Prostate gland (tissue), 2 donors: ENCODE measurements at regions of chr10 and their contacts with region 1.

Region 1: GRCh38 chr10:110210674-110211464 is 3.5 kb downstream of the MXI1 start:
- DNase-seq: peak; percentile 97
- H3K4me3 ChIP-seq: peak overlapping the region; percentile 69 to 70
- H3K27ac ChIP-seq: peak overlapping the region; percentile 81 to 91
- H3K4me1 ChIP-seq: peaks cover 3% of the 10 kb centered on the region
- H3K27me3 ChIP-seq: no peaks in the 10 kb centered on the region
- CTCF ChIP-seq: no peak
- POLR2A ChIP-seq: peak; percentile 67

Region 2: DNA sequence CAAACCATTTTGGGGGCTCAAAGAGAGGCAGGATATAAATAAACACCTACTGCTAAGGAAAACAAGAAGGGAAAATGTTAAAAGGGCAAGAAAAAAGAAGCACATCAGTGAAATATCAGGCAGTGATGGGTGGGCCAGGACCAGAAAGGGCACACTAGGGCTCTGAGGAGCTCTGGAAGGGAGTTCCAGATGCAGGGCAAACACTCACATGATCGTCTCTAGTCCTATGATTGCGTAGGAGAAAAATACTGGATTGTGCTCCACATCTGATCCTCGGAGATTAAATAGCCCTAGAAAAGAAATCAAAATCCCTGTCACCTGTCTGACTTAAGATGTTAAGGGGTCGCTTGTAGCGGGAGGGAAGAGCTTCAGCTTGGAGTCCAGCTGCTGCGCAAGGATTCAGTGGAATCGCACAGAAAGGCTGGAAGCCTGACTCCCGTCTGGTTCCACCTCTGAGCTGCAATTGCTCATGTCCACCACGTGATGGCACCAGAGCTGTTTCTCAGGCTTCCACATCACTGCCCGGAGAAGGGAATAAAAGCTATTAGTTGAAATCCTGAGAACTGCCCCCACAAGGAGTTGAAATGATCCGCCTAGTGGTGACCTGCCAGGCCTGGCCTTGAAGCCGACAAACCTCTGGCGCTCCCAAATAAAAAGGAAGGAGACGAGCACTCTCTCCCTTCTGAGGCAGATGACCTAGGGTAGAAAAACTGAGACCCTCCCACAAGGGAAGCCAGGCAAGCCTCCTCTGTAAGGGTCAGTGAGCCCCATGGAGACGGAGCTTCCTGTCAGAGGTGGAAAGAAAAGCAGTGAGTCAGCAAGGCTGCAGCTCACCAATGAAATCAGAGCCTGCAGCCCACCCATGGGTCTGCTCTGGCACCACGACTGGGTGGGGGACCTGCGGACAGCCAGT is 326.8 kb before region 1 on chr10:
- intact Hi-C with region 1: loop called (anchors 10 kb)
- DNase-seq: peak; percentile 41
- H3K4me3 ChIP-seq: no peak overlapping the region
- H3K27ac ChIP-seq: peak overlapping the region; percentile 14 to 42
- H3K4me1 ChIP-seq: no peaks in the 10 kb centered on the region
- H3K27me3 ChIP-seq: no peaks in the 10 kb centered on the region
- CTCF ChIP-seq: peak; percentile 84 to 93 (median 88)
- POLR2A ChIP-seq: no peak

Region 3: DNA sequence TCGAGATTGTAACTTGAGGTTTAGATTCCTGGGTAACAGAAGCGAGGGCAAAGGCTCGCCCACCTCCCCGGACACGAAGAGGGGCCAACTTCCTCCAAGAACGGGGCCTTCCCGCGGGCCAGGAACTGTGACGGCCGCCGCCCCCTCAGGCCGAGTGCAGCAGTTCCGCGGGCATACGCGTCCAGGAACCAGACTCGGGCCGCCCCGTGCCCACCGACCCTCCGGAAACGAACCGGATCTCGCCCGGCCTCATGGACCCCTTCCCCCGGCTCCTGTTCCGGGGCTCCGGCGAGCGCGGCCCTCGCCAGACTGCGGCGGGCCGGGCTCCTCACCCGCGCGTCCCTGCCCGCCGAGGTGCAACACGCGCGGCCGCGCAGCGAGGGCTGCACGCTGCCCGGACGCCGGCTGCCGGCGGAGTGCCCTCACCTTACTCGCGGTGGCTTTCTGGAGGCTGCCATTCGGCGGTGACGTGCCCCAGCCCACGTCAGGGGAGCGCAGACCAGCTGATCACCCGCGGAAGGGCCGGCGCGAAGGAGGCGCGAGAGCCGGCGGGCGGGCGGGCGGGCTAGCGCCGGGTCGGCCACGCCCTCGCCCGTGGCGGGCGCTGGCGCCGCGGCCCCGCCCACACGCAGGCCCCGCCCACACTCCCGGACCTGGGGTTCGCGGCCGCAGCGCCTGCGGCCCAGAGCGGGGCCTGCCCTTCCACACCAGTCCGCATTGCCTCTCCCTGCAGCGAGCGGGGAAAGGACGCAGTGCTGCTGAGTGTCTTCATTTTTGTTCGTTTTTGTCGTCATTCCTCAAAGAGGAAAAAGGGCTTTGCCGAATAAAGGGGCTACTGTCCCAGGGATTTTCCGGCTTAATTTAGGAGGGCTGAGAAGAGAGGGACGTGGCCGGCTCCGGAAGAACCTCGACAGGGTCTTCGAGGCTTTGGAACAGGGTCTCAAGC is 287.6 kb before region 1 on chr10 and contains the start of gene XPNPEP1:
- intact Hi-C with region 1: loop called (anchors 10 kb)
- DNase-seq: peak; percentile 86
- H3K4me3 ChIP-seq: peak within 1 kb of the TSS; percentile 92
- H3K27ac ChIP-seq: peak within 1 kb of the TSS; percentile 87 to 93
- H3K4me1 ChIP-seq: no peaks in the 10 kb centered on the region
- H3K27me3 ChIP-seq: no peaks in the 10 kb centered on the region
- CTCF ChIP-seq: no peak
- POLR2A ChIP-seq: peak; percentile 84
- total RNA-seq, gene XPNPEP1: 53.4 to 64.3 TPM

Region 4: DNA sequence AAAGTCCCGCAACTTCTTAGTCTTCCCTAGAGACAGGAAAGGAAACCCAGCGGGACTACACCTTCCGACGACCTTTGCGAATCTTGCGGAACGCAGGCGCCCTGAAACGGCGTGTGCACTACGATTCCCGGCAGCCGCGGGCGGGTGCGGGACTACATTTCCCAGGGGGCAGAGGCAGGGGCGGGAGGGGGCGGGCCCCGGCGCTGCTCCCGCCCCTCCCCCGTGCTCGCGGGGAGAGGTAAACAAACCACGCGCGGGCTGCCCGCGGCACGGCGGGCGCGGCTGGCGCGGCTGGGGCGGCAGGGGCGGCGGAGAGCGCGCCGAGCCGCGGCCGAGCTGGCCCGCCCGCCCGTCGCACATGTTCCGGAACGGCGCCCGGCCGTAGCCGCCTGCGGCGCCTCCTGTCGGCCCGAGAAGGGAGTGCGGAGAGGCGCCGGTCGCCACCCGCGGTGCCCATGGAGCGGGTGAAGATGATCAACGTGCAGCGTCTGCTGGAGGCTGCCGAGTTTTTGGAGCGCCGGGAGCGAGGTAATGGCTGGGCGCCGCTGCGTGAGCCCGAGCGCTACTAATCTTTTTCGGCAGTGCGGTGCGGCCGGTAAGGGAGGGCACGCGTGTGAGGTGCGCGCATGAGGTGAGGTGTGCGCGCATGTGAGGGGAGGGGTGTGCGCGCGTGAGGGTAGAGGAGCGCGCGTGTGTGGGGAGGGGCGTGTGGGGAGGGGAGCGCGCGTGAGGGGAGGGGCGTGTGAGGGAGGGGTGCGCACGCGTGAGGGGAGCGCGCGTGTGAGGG is 15.1 kb after region 1 on chr10:
- intact Hi-C with region 1: loop called (anchors 1 kb)
- DNase-seq: peak; percentile 90
- H3K4me3 ChIP-seq: peak overlapping the region; percentile 78 to 89
- H3K27ac ChIP-seq: peak overlapping the region; percentile 96
- H3K4me1 ChIP-seq: no peaks in the 10 kb centered on the region
- H3K27me3 ChIP-seq: no peaks in the 10 kb centered on the region
- CTCF ChIP-seq: peak; percentile 56 to 83 (median 75)
- POLR2A ChIP-seq: peak; percentile 36

Region 5: DNA sequence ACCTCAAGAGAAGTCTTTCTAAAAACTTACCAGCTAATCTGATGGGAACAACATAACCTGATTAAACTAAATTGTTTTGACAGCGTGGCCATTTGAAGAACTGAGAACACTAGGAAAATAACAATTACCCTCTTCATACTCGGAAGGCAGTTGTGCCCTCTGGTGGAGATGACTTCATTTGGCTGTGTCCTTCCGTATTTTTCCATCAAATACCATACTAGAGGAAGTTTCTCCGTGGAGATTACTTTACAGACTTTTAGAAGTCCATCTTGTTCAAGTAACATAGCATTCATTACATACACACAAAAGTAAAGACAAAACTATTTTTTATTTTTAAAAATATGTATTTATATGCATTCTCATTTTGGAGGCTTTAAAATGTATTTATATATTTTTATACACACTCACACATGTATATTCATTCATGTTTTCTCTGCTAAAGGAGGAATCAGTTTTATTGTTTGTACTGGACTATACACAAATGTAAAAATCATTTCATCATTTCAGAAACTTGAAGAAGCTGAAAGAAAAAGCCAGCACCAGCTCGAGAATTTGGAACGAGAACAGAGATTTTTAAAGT is 68.6 kb after region 1 on chr10:
- intact Hi-C with region 1: loop called (anchors 2 kb)
- DNase-seq: peak; percentile 62
- H3K4me3 ChIP-seq: no peak overlapping the region
- H3K27ac ChIP-seq: peak overlapping the region in 1 of 2 donors; percentile 36
- H3K4me1 ChIP-seq: no peaks in the 10 kb centered on the region
- H3K27me3 ChIP-seq: no peaks in the 10 kb centered on the region
- CTCF ChIP-seq: peak; percentile 52 to 87 (median 80)
- POLR2A ChIP-seq: no peak

Region 6: DNA sequence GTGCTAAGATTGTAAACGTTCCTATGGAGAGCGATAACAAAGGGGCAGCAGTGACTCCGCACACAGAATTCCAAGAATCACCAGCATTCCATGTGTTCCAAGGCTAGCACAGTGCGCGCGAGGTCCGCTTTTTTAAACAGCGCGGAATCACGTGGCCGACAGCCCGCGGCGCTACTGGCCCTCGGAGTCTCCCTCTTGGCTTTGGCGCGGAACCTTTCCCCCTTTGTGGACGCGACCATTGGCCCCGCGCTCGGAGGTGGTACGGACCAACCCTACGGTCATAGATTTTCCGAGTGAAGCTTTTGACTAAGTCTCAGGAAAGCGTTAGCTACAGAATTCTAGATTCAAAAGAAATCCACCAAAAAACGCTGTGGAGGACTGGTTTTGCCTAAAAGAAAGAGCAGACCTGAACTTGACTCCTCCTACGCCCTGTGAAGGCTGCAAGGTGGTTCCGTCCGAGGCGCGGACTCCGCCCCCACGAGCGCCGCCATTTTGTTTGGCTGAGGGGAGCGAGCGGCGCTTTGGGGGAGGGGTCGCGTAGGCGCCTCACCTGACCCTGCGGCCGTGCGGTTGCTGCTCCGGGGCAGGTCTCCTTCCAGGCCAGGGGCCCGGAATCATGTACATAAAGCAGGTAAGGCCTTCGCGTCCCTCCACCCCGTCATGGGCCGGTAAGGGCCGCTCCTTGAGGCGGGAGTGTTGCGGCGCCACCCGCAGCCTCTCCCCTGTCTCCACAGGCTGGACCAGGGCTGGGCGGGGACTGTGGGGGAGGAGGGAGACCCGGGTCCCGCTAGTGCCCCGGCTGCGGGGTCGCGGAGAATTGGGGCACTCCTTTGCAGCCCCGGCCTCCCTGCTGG is 356.6 kb after region 1 on chr10 and contains the start of gene SMC3:
- intact Hi-C with region 1: loop called (anchors 10 kb)
- DNase-seq: peak; percentile 83
- H3K4me3 ChIP-seq: peak within 1 kb of the TSS; percentile 67 to 94
- H3K27ac ChIP-seq: peak within 1 kb of the TSS; percentile 76 to 88
- H3K4me1 ChIP-seq: no peaks in the 10 kb centered on the region
- H3K27me3 ChIP-seq: no peaks in the 10 kb centered on the region
- CTCF ChIP-seq: no peak
- POLR2A ChIP-seq: peak; percentile 30
- total RNA-seq, gene SMC3: 25.6 to 38.8 TPM